ENCODE measurements at regions of chr13 and their contacts with region 1.

Region 1: DNA sequence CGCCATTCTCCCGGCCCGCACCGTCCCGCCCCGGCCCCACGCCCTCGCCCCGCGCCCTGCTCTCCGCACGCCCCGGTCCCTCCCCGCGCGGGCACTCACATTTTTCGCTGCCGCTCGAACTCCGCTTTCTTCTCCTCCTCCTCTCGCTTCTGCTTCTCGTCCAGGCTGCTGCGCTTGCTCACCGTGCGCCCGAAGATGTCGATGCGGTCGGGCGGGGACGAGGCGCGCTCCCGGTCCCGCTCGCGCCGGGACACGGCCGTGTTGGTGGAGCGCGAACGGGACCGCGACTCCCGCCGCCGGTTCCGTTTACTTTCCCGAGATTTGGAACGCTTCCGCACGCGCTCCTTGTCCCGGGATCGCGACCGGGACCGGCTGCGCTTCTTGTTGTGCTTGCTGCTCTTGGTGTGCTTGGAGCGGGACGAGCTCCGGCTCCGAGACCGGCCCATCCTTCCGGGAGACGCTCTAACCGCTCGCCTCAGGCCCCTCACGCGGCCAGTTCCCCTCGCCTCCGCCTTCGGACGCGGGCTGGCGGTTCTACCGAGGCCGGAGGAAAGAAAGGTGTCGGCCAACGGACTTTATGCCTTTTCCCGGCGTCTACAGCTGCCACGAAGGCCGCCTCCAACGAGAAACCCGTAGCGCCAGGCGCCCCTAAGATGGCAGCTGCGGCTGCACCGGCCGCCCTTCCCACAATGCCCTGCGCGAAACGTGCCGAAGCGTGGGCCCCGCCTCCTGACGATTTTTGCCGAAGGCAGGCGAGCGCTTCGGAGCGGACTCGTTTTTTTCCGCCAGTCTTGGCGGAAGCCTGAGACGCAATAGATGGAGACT is at the start of gene ARGLU1:
- DNase-seq: peak; percentile 77 to 98 (median 94)

Region 2: DNA sequence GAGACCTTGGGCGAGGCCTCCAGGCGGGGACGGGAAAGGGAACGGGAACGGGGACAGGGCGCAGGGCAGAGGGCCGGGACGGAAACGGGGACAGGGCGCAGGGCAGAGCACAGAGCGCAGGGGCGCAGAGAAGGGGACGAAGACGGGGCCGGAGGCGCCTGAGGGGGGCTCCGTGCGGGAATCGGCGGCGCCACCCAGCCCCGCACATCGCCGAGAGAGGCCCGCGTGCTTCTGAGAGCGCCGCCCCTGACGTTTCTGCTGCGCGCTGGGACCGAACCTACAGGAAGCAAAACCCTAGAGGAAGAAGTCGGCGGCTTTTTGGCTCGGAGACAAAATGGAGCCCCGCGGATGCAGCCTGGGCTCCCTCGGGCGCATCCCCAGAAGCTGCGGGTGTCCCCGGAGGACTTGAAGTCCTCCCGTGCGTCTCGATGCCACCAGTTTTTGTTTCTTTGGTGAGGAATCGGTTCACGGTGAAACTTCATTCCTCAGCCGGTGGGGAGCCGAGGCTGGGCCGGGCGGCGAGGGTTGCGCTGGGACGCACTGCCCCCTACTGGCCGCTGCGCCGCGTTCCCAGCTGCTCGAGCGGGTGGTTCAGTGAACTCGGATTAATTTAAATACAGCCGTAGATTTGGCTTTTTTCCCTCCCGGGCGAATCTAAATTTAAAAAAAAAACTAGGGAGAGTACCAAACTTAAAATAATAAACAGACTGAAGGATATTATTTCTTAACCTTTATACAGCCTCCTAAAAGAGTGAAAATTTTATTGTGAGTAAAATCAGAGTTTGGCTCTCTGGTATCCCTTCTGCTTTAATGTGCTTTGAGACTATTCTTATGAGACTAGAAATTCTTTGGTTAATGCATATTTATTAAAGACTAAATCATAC is 350.2 kb after region 1 on chr13:
- intact Hi-C with region 1: loop called (anchors 10 kb)
- DNase-seq: peak; percentile 56 to 93 (median 86)

Measured in head of caudate nucleus (tissue), 42 donors.